AG04450 (cell line): ENCODE measurements at regions of chr17 and their contacts with region 1.

Region 1: GRCh38 chr17:35373534-35373983 is at the start of gene SLFN11:
- DNase-seq: peak; percentile 93
- H3K4me3 ChIP-seq: peak within 1 kb of the TSS; percentile 92
- H3K27ac ChIP-seq: peak within 1 kb of the TSS; percentile 100
- H3K27me3 ChIP-seq: no peaks in the 10 kb centered on the region
- CTCF ChIP-seq: no peak
- polyA plus RNA-seq, gene SLFN11: 53.3 and 73.2 TPM in 2 replicates

Region 2: DNA sequence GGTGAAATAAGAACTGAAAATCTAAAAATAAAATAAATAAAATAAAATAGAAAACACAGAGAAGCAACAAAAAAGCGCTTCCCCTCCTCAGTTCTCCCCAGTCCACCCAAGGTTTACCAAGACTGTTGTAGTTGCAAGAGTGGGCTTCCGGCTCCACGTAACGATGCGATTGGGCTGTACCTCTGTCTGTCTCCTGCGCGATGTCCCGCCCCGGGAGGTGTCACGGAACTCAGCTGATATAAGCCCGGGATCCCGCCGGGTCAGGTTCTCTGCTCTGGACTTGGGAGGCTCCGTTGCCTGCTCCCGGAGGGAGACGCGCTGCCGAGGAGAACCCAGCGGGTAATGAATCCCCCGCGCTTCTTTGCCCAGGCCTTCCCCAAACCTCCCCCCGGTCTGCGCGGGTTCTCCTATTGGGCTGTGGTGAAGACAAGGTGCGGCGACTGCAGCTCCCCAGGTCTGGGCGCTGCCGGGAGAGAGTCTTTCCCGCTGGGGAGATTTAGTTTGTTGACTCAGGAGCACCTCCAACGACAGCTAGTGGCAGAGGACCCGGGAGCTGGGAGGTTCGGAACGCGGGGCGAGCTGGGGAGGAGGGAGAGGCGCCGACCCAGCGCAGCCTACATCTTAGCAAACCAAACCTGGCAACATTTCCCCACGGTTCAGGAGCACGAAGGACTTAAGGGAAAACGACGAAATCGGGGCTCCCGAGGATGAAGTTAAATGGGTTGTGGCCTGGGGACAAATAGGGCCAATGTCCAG is 130.6 kb before region 1 on chr17 and contains the start of gene SLFN5:
- CTCF ChIA-PET with region 1: no interaction called
- POLR2A ChIA-PET with region 1: interaction called, 11 read pairs
- DNase-seq: peak; percentile 87
- H3K4me3 ChIP-seq: peak within 1 kb of the TSS; percentile 70
- H3K27ac ChIP-seq: peak within 1 kb of the TSS; percentile 85
- H3K27me3 ChIP-seq: no peaks in the 10 kb centered on the region
- CTCF ChIP-seq: no peak
- polyA plus RNA-seq, gene SLFN5: 64.2 and 69.0 TPM in 2 replicates

Region 3: DNA sequence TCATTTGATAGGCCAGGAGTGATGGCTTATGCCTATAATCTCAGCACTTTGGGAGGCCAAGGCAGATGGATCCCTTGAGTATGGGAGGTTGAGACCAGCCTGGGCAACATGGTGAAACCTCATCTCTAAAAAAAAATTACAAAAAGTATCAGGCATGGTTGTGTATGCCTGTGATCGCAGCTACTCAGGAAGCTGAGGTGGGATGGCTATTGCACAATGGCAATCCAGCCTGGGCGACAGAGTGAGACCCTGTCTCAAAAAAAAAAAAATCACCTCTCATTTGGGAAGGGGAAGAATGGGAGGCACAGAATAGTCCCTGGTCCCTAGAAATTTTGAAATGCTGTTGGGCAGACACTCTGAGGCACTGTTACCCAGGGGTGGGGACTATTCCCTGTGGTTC is 35.3 kb before region 1 on chr17:
- CTCF ChIA-PET with region 1: no interaction called
- POLR2A ChIA-PET with region 1: no interaction called
- DNase-seq: no peak
- H3K4me3 ChIP-seq: no peak overlapping the region
- H3K27ac ChIP-seq: no peak overlapping the region
- H3K27me3 ChIP-seq: peaks cover 8% of the 10 kb centered on the region
- CTCF ChIP-seq: no peak

Region 4: GRCh38 chr17:35387496-35387895 is 13.9 kb after region 1 on chr17:
- CTCF ChIA-PET with region 1: no interaction called
- POLR2A ChIA-PET with region 1: interaction called, 10 read pairs
- DNase-seq: no peak
- H3K4me3 ChIP-seq: no peak overlapping the region
- H3K27ac ChIP-seq: no peak overlapping the region
- H3K27me3 ChIP-seq: peaks cover 2% of the 10 kb centered on the region
- CTCF ChIP-seq: no peak

Region 5: DNA sequence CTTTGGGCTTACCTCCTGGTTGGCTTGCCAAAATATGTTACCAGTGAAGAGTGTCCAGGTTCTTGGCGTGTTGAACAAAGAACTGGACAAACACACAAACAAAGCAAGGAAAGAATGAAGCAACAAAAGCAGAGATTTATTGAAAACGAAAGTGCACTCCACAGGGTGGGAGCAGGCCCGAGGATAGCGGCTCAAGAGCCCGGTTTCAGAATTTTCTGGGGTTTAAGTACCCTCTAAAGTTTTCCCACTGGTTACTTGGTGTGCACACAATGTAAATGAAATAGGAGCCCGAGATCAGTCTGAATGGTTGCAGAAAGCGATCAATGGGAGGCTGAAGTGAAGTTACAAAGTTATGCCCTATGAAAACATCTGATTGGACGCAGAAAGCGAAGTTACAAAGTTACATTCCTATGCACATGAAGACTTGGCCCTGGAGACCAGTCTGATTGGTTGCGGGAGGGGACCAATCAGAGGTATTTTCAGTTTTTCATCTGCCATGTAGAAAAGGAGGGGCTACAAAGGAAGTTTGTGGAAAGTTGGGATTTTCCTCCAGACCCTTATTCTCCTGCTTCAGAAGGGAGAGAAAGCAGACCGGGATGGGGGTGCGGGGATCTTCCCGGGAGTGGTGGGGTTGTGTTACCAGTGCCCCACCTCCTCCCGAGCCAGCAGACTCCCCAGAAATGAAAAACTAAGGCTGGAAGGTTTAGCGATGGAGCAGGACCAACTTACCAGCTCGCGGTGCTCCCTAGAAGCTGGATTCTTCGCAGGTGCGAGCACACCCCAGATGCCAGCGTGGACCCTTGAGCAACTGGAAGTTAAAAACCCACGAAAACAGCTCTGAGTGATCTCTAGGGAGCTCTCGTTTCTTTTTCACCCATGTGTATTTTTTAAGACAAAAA is 58.9 kb after region 1 on chr17 and contains the start of gene SLFN12:
- CTCF ChIA-PET with region 1: no interaction called
- POLR2A ChIA-PET with region 1: interaction called, 25 read pairs
- DNase-seq: peak; percentile 95
- H3K4me3 ChIP-seq: peak within 1 kb of the TSS; percentile 80
- H3K27ac ChIP-seq: peak within 1 kb of the TSS; percentile 99
- H3K27me3 ChIP-seq: no peaks in the 10 kb centered on the region
- CTCF ChIP-seq: no peak
- polyA plus RNA-seq, gene SLFN12: 27.7 and 36.1 TPM in 2 replicates